ENCODE measurements at regions of chr3 and their contacts with region 1.

Region 1: GRCh38 chr3:183895296-183895695 is 10.6 kb upstream of the PARL start:
- DNase-seq: peak in 1 of 2 donors; percentile 66
- H3K4me3 ChIP-seq: no peak overlapping the region
- H3K27ac ChIP-seq: no peak overlapping the region
- H3K4me1 ChIP-seq: no peaks in the 10 kb centered on the region
- H3K27me3 ChIP-seq: peaks cover 0 to 38% (median 0%) of the 10 kb centered on the region in 3 donors
- CTCF ChIP-seq: peak in 5 of 7 experiments; percentile 68 to 90 (median 76)
- EP300 ChIP-seq: no peak
- POLR2A ChIP-seq: no peak

Region 2: DNA sequence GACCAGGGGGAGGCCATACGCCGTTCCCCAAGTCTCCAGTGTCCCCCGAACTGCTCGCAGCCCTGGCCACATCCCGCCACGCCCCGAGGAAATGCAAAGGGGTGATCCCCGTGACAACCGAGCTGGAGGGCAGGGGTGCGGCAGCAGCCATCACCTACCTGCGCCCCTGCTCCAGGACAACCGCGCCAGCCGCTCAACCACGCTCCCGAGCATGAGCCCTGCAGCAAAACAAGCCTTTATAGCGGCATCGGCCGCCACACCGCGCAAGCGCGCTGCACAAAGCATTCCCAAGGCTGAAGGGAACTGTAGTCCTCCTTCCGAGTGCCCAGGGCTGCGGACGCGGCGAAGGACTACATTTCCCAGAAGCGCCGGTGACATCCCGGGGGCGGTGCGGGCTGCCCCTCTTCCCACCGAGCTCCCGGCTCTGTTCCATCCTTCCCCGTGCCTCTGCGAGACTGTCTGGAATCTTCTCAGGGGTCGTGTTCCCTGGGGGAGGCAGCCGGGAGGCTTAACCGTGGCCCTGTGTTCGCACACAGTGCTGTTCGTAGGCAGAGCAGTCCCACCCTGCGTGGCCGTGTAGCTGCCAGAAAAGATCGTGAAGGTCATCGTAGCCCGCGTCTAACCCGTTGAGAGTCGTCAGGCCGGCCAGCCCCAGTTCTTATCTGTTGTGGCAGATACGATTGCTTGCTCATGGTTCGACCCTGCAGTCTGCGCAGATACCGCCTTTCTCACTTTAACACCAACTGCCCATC is 122.6 kb after region 1 on chr3 and contains the start of gene ABCC5:
- intact Hi-C with region 1: loop called (anchors 5 kb)
- DNase-seq: peak; percentile 92 to 98
- H3K4me3 ChIP-seq: peak within 1 kb of the TSS; percentile 92 to 100 (median 99)
- H3K27ac ChIP-seq: peak within 1 kb of the TSS; percentile 82 to 89 (median 83)
- H3K4me1 ChIP-seq: peaks cover 21 to 37% (median 28%) of the 10 kb centered on the region in 4 donors
- H3K27me3 ChIP-seq: no peaks in the 10 kb centered on the region
- CTCF ChIP-seq: peak in 3 of 7 experiments; percentile 3 to 79 (median 68)
- EP300 ChIP-seq: no peak
- POLR2A ChIP-seq: no peak
- total RNA-seq, gene ABCC5: 62.6 to 241 (median 122) TPM

Region 3: GRCh38 chr3:184135149-184135910 is 240.0 kb after region 1 on chr3 and contains the start of gene EIF2B5:
- intact Hi-C with region 1: loop called (anchors 10 kb)
- DNase-seq: peak; percentile 91 to 97
- H3K4me3 ChIP-seq: peak within 1 kb of the TSS; percentile 84 to 98 (median 94)
- H3K27ac ChIP-seq: peak within 1 kb of the TSS; percentile 91 to 94 (median 93)
- H3K4me1 ChIP-seq: peaks cover 21 to 35% (median 28%) of the 10 kb centered on the region in 4 donors
- H3K27me3 ChIP-seq: no peaks in the 10 kb centered on the region
- CTCF ChIP-seq: peak in 3 of 7 experiments; percentile 15 to 43 (median 36)
- EP300 ChIP-seq: no peak
- POLR2A ChIP-seq: no peak
- total RNA-seq, gene EIF2B5: 1.4 to 113 (median 36.5) TPM

Region 4: DNA sequence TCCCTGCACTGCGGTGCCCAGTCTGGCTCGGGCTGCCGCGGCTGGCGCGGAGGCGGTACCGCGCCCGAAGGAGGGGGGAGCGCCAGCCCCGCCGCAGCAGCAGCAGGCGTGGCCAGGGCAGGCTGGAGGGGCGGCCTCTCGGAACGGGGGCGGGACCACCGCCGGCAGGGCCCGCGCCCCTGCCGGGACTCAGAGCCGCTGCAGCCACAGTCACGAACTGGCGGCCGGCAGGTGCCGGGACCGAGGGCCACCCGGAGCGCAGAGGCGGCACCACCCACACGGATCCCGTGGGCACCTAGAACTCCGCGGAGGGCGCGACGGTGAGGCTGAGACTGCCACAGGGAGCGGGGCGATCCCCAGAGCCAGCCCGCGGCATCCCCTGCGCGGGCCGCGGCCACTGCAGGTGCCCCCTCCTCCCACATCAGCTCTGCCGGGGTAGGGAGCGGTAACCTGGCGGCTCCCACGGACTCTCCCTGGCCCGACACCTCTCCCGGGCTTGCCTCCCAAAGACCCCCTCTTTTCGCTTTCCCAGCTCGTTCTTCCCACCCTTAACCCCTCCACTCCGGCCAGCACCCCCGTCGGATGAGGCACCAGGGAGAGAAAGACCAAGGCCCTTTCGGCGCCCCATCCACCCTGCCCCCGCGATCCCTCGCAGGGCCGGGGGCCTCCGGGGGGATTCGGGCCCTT is 334.2 kb after region 1 on chr3 and contains the start of gene VWA5B2:
- intact Hi-C with region 1: loop called (anchors 10 kb)
- DNase-seq: peak; percentile 73 to 93
- H3K4me3 ChIP-seq: peak within 1 kb of the TSS; percentile 48 to 64 (median 58)
- H3K27ac ChIP-seq: peak within 1 kb of the TSS in 3 of 5 donors; percentile 6 to 48 (median 37)
- H3K4me1 ChIP-seq: peaks cover 19 to 29% (median 27%) of the 10 kb centered on the region in 4 donors
- H3K27me3 ChIP-seq: peaks cover 16 to 85% (median 53%) of the 10 kb centered on the region in 3 donors
- CTCF ChIP-seq: peak in 4 of 7 experiments; percentile 10 to 23 (median 19)
- EP300 ChIP-seq: no peak
- POLR2A ChIP-seq: no peak
- total RNA-seq, gene VWA5B2: under 0.01 to 100.0 (median 2.4) TPM